ENCODE measurements at regions of chr6 and their contacts with region 1.

Region 1: DNA sequence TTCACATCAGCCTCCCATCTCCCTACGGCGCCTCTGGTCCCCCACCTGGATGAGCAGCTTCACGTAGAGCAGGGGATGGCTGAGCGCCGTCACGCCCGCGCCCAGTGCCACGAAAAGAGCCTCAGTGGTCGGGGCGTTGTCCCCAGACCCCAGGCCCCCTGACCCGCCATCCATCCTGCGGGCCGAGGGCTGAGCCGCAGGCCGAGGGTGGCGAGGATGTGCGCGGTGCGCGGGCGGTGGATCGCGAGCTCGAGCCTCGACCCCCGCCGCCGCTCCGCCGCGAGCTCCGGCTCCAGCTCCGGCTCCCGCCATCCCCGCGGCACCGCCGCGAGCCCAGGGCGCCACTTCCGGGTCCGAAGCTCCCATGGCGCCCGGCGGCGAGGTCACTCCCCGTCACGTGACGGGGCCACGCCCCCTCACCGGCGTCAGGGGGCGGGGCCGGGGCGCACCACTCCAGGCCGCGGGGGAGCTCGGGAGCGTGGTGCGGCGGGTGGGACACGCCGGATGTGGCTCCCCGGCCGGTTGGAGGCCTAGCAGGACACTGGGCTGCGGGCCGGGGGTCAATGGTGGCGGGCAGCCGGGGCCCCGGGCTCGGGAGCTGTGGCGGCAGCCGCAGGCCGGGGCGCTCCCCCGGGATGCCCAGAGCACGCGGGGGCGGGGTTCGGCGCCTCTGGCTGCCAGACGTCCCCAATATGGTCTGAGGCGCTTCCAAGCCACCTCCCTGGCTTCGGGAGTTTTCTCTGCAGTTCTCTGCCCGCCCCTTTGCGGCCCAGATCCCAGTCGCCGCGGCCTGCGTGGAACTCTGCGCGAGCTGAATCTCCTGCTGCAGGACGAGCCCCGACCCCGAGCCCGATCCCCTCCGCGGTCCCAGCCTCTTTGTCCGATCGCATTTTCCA is at the start of gene MTCH1:
- DNase-seq: peak; percentile 97
- H3K4me3 Mint-ChIP-seq: no peak within 1 kb of the TSS
- H3K27ac Mint-ChIP-seq: peak within 1 kb of the TSS; percentile 97
- H3K4me1 Mint-ChIP-seq: peaks cover 19% of the 10 kb centered on the region
- H3K27me3 Mint-ChIP-seq: peaks cover 7% of the 10 kb centered on the region
- total RNA-seq, gene MTCH1: 119 TPM in 2 replicates

Region 2: DNA sequence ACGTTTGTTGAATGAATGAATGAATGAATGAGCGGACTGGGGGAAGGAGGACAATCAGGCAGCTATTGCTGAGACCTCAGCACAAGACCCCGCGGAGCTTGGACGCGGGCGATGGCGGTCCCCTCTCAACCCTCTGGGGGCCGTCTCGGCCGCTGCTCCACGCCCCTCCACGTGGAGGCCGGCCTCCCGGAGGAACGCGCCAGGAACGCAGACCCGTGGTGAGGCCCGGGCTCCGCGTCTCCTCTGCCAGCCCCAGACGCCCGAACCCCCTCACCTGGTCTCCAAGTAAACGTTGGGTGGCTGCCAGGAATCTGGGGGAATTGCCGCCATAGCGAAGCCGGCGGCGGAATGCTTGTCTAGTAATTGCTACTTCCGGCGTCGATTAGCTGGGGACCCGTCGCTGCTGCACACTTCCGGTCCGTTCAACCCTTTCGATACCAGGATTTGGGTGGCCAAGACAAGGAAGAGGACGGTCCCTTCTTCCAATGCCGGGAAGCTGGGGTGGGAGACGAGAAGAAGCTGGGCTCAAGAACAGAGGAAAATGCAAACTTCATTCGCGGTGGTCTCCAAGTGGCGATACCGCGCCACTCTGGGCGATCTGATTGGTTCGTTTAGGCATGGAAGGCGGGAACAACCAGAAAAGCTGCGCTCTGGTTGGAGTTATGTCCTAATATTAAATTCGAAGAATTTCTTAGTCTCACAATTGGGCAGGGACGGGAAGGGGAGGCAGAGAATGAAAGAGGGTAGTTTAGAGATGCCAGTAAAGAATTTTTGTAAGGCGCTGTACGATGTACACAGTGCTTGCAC is 111.4 kb before region 1 on chr6 and contains the start of gene PPIL1:
- intact Hi-C with region 1: loop called (anchors 5 kb)
- DNase-seq: peak; percentile 94
- H3K4me3 Mint-ChIP-seq: peak within 1 kb of the TSS; percentile 99
- H3K27ac Mint-ChIP-seq: peak within 1 kb of the TSS; percentile 98
- H3K4me1 Mint-ChIP-seq: peaks cover 38% of the 10 kb centered on the region
- H3K27me3 Mint-ChIP-seq: peaks cover 3% of the 10 kb centered on the region
- total RNA-seq, gene PPIL1: 65.0 and 65.1 TPM in 2 replicates

Region 3: GRCh38 chr6:36885461-36886401 is 100.3 kb before region 1 on chr6 and contains the start of gene C6orf89:
- intact Hi-C with region 1: loop called (anchors 1 kb)
- DNase-seq: peak; percentile 99
- H3K4me3 Mint-ChIP-seq: peak within 1 kb of the TSS; percentile 89
- H3K27ac Mint-ChIP-seq: peak within 1 kb of the TSS; percentile 89
- H3K4me1 Mint-ChIP-seq: peaks cover 28% of the 10 kb centered on the region
- H3K27me3 Mint-ChIP-seq: no peaks in the 10 kb centered on the region
- total RNA-seq, gene C6orf89: 25.9 and 27.4 TPM in 2 replicates

Region 4: DNA sequence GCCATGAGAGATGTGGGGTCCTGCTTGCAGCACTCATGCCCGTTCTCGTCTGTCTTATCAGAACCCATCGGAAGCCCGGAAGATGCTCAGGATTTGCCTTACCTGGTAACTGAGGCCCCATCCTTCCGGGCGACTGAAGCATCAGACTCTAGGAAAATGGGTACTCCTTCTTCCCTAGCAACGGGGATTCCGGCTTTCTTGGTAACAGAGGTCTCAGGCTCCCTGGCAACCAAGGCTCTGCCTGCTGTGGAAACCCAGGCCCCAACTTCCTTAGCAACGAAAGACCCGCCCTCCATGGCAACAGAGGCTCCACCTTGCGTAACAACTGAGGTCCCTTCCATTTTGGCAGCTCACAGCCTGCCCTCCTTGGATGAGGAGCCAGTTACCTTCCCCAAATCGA is 23.2 kb before region 1 on chr6:
- intact Hi-C with region 1: loop called (anchors 1 kb)
- DNase-seq: peak; percentile 96
- H3K4me3 Mint-ChIP-seq: no peak overlapping the region
- H3K27ac Mint-ChIP-seq: peak overlapping the region; percentile 59
- H3K4me1 Mint-ChIP-seq: peaks cover 38% of the 10 kb centered on the region
- H3K27me3 Mint-ChIP-seq: no peaks in the 10 kb centered on the region

Measured in activated CD4-positive, alpha-beta T cell treated with anti-CD3 and anti-CD28 coated beads, Interleukin-2, amount 10 ng/mL, durations not matched to agents 24 days and 14 days (primary cell).